ENCODE measurements at regions of chr2 and their contacts with region 1.

Region 1: GRCh38 chr2:70871398-70872211 is 36.0 kb upstream of the CD207 start:
- DNase-seq: no peak
- H3K4me3 ChIP-seq: no peak overlapping the region
- H3K27me3 ChIP-seq: peaks cover 12% of the 10 kb centered on the region
- CTCF ChIP-seq: peak; percentile 95

Region 2: DNA sequence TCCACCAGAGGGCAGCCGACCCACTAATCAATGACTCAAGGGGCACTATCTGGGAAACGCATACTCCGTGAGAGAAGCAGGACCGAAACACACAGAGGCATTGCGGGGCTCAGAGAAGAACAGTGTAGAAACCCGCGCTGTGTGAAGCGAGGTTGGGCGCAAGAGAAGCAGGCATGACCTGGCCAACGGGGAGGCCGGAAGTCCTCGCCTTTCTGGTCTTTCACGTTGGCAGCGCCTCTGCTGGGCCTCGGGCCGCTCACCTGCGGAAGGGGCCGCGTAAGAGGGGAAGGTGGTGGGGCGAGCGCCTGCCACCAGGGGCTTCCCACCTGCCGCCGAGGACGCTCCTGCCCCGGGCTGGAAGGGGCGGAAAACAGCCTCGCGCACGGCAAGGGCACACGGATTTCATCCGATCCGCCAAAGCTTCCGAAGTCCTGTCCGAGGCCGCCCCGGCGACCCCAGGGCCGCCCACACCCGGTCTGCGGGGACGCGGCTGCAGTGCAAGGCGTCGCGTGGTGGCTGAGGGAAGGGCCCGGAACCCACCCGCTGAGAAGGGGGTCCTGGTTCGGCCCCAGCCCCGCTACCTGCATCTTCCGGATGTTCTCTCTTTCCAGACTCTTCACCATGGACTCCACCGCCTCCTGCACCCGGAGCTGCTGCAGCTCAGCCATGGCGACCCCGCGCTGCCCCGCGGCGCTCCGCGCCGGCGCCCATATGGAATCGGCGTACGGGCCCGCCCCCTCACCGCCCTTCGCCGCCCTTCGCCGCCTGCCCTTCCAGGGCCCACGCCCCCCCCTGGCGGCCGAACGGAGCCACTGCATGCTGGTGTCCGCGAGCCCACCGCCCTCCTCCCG is 570.0 kb before region 1 on chr2 and contains the start of gene FAM136A:
- CTCF ChIA-PET with region 1: interaction called, 12 read pairs
- POLR2A ChIA-PET with region 1: no interaction called
- DNase-seq: no peak
- H3K4me3 ChIP-seq: peak within 1 kb of the TSS; percentile 97
- H3K27me3 ChIP-seq: no peaks in the 10 kb centered on the region
- CTCF ChIP-seq: peak; percentile 87
- polyA plus RNA-seq, gene FAM136A: 22.9 and 28.3 TPM in 2 replicates

Region 3: DNA sequence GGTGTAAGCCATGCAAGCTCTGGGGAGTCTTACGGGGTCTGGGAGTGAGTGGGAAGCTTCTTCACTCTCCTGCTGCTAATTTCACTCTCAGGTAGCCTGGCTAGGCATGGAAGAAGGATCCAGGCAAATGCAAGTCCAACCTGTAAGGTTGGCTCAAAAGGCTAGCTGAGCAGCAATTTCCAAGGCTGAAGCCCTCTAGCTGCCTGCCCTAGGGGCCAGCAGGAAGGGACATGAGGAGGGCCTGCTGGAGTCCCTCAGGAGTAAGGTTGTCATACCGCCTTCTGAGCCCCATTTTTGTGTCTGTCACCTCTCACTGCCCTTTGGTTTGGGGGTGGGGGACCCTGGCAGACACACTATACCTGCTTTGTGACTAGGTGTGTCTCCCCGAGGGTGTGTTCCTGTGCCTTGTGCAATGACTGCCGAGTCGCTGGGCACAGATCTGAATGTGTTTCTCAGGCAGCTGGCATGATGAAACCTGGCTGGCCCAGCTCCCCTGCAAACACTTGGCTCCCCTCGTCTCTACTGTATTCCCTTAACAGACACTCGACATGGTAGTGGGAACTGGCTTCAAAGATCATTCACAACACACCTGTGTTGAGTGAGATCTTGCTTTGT is 445.8 kb before region 1 on chr2:
- CTCF ChIA-PET with region 1: no interaction called
- POLR2A ChIA-PET with region 1: no interaction called
- DNase-seq: no peak
- H3K4me3 ChIP-seq: no peak overlapping the region
- H3K27me3 ChIP-seq: peaks cover 2% of the 10 kb centered on the region; the same call in 1 of the 2 replicates
- CTCF ChIP-seq: no peak

Region 4: DNA sequence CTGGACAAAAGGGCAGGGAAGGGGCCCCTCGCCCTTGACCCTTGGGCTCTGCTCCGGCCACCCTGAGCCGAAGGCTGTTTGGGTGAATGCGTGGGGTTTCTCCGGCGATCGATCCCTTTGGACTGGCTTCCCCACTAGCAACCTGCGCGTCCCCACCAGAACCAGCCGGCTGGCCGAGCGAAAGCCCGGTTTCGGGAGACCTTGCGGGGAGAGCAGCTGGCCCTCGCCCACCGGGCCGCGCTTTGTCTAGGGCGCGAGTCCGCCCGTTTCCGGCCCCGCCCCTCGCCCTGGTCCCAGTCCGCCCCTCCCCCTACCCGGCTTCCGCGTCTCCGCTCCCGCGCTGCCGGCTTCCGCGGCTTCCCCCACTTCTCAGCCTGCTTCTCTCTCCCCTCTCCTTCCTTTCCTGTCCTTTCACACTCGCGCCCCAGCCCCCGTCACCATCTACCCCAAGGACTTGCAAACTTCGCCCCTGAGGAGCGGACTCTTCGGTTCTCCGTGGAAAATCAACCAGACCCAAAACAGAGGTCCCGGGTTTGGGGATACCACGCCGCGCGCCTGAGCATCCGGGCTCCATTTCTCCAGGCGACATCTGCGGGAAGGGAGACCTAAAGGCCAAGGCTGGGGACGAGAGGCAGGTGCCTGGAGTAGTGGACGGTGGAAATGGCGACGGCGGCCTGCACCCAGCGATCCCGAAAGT is 16.1 kb after region 1 on chr2:
- CTCF ChIA-PET with region 1: interaction called, 20 read pairs
- POLR2A ChIA-PET with region 1: no interaction called
- DNase-seq: no peak
- H3K4me3 ChIP-seq: peak overlapping the region; percentile 25
- H3K27me3 ChIP-seq: peaks cover 64% of the 10 kb centered on the region
- CTCF ChIP-seq: no peak

Region 5: GRCh38 chr2:70926042-70926441 is 54.4 kb after region 1 on chr2:
- CTCF ChIA-PET with region 1: interaction called, 91 read pairs
- POLR2A ChIA-PET with region 1: no interaction called
- DNase-seq: no peak
- H3K4me3 ChIP-seq: no peak overlapping the region
- H3K27me3 ChIP-seq: no peaks in the 10 kb centered on the region
- CTCF ChIP-seq: no peak

Region 6: DNA sequence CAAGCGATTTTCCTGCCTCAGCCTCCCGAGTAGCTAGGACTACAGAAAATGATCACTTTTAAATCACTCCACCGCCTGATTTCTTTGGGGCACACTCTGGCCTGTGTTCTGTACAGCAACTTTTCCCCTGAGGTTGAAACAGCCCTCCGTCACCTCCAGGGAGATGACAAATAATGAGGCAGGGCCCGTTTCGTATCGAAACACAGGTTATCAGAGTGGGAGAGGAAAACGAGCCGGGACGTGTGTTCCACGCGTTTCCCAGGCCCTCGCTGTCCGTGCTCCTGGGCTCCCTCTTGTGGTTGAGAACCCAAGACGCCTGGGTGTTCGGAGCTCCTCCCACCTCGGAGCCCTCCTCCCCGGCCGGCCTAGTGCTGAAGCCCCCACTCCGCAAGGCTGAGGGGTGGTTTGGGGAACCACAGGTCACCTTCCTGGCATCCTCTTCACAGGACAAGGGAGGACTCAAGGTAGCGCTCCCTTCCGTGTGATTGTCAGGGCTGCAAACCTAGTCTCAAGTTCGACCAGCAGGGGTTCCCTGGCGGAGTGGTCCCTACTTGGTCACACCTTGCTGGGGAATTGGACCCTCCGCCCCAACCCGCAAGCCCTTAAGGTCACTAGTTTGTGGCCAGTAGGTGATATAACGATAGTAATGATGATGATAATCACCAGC is 76.9 kb after region 1 on chr2:
- CTCF ChIA-PET with region 1: interaction called, 327 read pairs
- POLR2A ChIA-PET with region 1: no interaction called
- DNase-seq: no peak
- H3K4me3 ChIP-seq: no peak overlapping the region
- H3K27me3 ChIP-seq: no peaks in the 10 kb centered on the region
- CTCF ChIP-seq: peak; percentile 95